Common myeloid progenitor, CD34-positive (primary cell): ENCODE measurements at regions of chr2 and their contacts with region 1.

Region 1: GRCh38 chr2:220687231-220687843 is 884.8 kb downstream of the EPHA4 start:
- DNase-seq: peak; percentile 62 to 81 (median 75)
- H3K4me3 ChIP-seq: no peak overlapping the region
- H3K27ac ChIP-seq: no peak overlapping the region
- H3K4me1 ChIP-seq: no peaks in the 10 kb centered on the region
- H3K27me3 ChIP-seq: no peaks in the 10 kb centered on the region

Region 2: DNA sequence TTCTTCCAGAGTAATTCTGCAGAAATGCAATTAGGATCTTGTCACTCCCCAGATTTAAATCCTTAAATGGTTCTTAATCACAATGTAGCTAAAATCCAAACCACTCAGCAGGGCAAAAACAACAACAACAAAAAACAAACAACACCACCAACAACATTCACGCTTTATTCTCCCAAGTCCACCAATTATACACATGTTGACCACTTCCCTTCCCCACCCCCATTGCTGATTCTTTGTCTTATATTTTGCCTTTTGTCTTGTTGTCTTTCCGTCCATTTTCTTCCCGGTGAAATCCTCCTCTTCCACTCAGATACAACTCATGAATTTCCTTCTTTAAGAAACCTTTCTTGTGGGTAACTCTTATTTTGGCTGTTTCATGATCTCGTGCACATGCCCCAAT is 18.0 kb before region 1 on chr2:
- CTCF ChIA-PET with region 1: no interaction called
- POLR2A ChIA-PET with region 1: no interaction called
- DNase-seq: no peak
- H3K4me3 ChIP-seq: no peak overlapping the region
- H3K27ac ChIP-seq: no peak overlapping the region
- H3K4me1 ChIP-seq: no peaks in the 10 kb centered on the region
- H3K27me3 ChIP-seq: peaks cover 0 to 2% (median 0%) of the 10 kb centered on the region in 5 experiments

Region 3: DNA sequence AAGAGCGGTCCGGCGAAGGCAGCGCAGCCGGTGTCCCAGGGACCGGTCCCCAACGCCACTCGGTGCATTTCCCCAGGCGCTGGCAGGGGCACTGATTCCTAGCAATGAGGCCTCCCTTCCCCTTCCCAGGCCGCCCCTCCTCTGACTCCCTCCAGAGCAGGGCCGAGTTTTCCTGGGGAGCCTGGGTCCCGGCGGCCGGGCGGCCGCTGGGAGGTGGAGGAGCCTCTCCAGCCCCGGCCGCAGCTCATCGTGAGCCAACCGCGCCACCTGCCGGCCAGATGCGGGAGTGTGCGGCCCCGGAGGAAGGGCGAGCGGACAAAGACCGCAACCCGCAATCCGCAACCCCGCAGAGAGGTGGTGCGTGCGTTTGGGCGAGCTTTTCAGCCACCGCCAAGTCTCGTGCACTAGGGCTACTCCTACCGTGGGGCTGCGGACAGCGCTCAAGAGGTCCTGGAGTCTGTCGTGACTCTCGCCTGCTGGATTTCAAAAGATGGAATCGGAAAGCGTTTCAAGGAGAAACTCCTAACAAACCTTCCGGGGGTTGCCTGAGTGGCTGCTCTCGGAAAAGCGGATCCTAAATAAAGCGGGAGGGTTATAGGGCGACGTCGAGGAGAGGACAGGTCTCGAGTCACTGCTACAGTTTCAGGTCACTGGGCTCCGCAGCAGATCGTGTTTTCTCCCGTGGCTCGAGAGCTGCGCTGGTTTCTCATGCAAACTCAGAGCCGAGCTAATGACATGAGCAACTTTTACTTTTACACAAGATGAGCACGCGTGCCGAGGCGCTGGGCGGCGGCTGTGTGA is 886.3 kb after region 1 on chr2:
- CTCF ChIA-PET with region 1: interaction called, 16 read pairs
- POLR2A ChIA-PET with region 1: no interaction called
- DNase-seq: peak; percentile 63 to 75 (median 74)
- H3K4me3 ChIP-seq: peak overlapping the region; percentile 13 to 82 (median 74)
- H3K27ac ChIP-seq: no peak overlapping the region
- H3K4me1 ChIP-seq: peaks cover 2 to 42% (median 34%) of the 10 kb centered on the region in 4 experiments
- H3K27me3 ChIP-seq: peaks cover 16 to 84% (median 40%) of the 10 kb centered on the region in 5 experiments